ENCODE measurements at regions of chr3 and their contacts with region 1.

Region 1: DNA sequence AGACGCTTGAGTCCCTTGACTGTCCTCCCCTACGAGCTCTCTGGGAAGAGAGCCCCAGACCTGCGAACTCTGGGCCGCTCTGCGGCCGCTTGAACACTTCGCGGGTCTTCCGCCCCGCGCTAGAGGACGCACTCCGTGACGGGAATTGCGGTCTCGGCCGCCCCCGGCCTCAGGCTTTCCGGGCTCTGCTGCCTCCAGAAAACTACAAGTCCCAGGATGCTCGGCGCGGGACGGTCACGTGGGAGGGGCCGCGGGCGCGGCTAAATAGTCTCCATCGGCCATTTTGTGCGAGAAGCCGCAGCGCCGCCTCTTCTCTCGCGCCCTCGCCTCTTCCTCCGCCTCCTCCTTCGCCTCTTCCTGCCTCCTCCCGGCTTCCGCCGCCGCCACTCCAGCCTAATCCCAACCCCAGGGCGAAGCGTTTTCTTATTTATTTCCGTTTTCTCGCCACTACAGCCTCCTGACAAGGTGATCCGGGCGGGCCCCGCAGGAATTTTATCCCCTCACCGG is at the start of gene EIF1B:
- DNase-seq: peak; percentile 95 to 99 (median 98)
- ATAC-seq: peak; percentile 97
- H3K4me3 ChIP-seq: peak within 1 kb of the TSS; percentile 80
- H3K4me3 Mint-ChIP-seq: peak within 1 kb of the TSS; percentile 92 to 100 (median 99)
- H3K27ac ChIP-seq: peak within 1 kb of the TSS; percentile 99
- H3K27ac Mint-ChIP-seq: peak within 1 kb of the TSS; percentile 97 to 100 (median 99)
- H3K4me1 ChIP-seq: peaks cover 5 to 16% of the 10 kb centered on the region in 2 donors
- H3K4me1 Mint-ChIP-seq: peaks cover 5 to 44% (median 30%) of the 10 kb centered on the region in 7 donors
- H3K27me3 ChIP-seq: no peaks in the 10 kb centered on the region
- H3K27me3 Mint-ChIP-seq: no peaks in the 10 kb centered on the region
- total RNA-seq, gene EIF1B: 34.5 to 82.0 (median 53.3) TPM

Region 2: GRCh38 chr3:39383045-39383880 is 926.2 kb before region 1 on chr3 and contains the start of gene SLC25A38:
- CTCF ChIA-PET with region 1: no interaction called
- POLR2A ChIA-PET with region 1: interaction called, 3 read pairs
- intact Hi-C with region 1: loop called (anchors 1 to 5 kb)
- DNase-seq: peak; percentile 60 to 86 (median 84)
- ATAC-seq: peak; percentile 86
- H3K4me3 ChIP-seq: peak within 1 kb of the TSS; percentile 88
- H3K4me3 Mint-ChIP-seq: peak within 1 kb of the TSS; percentile 91 to 99 (median 97)
- H3K27ac ChIP-seq: peak within 1 kb of the TSS; percentile 96
- H3K27ac Mint-ChIP-seq: peak within 1 kb of the TSS; percentile 95 to 100 (median 99)
- H3K4me1 ChIP-seq: peaks cover 26 to 39% of the 10 kb centered on the region in 2 donors
- H3K4me1 Mint-ChIP-seq: peaks cover 36 to 59% (median 49%) of the 10 kb centered on the region in 7 donors
- H3K27me3 ChIP-seq: no peaks in the 10 kb centered on the region
- H3K27me3 Mint-ChIP-seq: no peaks in the 10 kb centered on the region
- total RNA-seq, gene SLC25A38: 30.3 to 50.2 (median 46.8) TPM

Region 3: DNA sequence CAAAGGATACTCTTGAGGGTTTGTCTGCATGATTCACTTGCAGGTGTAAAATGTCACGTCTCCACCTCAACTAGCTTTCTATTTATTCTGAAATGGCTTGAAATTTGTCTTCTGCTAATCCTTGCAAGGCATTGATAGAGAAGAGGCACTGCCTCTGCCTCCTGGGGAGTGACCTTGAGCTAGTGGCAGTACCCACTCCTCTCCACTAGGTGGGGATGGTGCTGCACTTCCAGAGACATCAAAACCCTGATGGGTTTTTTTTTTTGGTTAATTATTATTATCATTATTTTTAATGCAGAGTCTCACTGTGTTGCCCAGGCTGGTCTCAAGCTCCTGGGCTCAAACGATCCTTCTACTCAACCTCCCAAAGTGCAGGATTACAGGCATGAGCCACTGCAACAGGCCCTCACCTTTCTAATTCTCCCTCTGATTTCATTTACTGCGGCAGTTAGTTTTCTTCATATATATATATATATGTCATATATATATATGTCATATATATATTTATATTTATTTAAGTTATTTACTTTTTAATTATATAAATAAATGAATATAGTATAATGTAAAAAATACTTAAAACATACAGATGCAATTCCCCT is 117.5 kb before region 1 on chr3:
- CTCF ChIA-PET with region 1: interaction called, 90 read pairs
- POLR2A ChIA-PET with region 1: interaction called, 3 read pairs
- intact Hi-C with region 1: loop called in 1 of 2 experiments (anchors 2 kb)
- DNase-seq: peak; percentile 7 to 55 (median 38)
- ATAC-seq: peak; percentile 85
- H3K4me3 ChIP-seq: no peak overlapping the region
- H3K4me3 Mint-ChIP-seq: no peak overlapping the region
- H3K27ac ChIP-seq: no peak overlapping the region
- H3K27ac Mint-ChIP-seq: no peak overlapping the region
- H3K4me1 ChIP-seq: no peaks in the 10 kb centered on the region
- H3K4me1 Mint-ChIP-seq: no peaks in the 10 kb centered on the region
- H3K27me3 ChIP-seq: no peaks in the 10 kb centered on the region
- H3K27me3 Mint-ChIP-seq: no peaks in the 10 kb centered on the region

Region 4: GRCh38 chr3:40258555-40258954 is 50.9 kb before region 1 on chr3:
- CTCF ChIA-PET with region 1: no interaction called
- POLR2A ChIA-PET with region 1: no interaction called
- intact Hi-C with region 1: no loop called
- DNase-seq: no peak
- ATAC-seq: peak; percentile 29
- H3K4me3 ChIP-seq: no peak overlapping the region
- H3K4me3 Mint-ChIP-seq: no peak overlapping the region
- H3K27ac ChIP-seq: no peak overlapping the region
- H3K27ac Mint-ChIP-seq: no peak overlapping the region
- H3K4me1 ChIP-seq: no peaks in the 10 kb centered on the region
- H3K4me1 Mint-ChIP-seq: no peaks in the 10 kb centered on the region
- H3K27me3 ChIP-seq: no peaks in the 10 kb centered on the region
- H3K27me3 Mint-ChIP-seq: no peaks in the 10 kb centered on the region

Region 5: GRCh38 chr3:40476478-40477470 is 167.3 kb after region 1 on chr3 and contains the start of gene ZNF619:
- CTCF ChIA-PET with region 1: interaction called, 3 read pairs
- POLR2A ChIA-PET with region 1: interaction called, 4 read pairs
- intact Hi-C with region 1: loop called in 1 of 2 experiments (anchors 1 kb)
- DNase-seq: peak; percentile 11 to 60 (median 47)
- ATAC-seq: peak; percentile 93
- H3K4me3 ChIP-seq: peak within 1 kb of the TSS; percentile 82
- H3K4me3 Mint-ChIP-seq: peak within 1 kb of the TSS; percentile 84 to 97 (median 89)
- H3K27ac ChIP-seq: peak within 1 kb of the TSS; percentile 80
- H3K27ac Mint-ChIP-seq: peak within 1 kb of the TSS; percentile 61 to 97 (median 90)
- H3K4me1 ChIP-seq: peaks cover 7 to 8% of the 10 kb centered on the region in 2 donors
- H3K4me1 Mint-ChIP-seq: peaks cover 13 to 38% (median 31%) of the 10 kb centered on the region in 7 donors
- H3K27me3 ChIP-seq: no peaks in the 10 kb centered on the region
- H3K27me3 Mint-ChIP-seq: no peaks in the 10 kb centered on the region
- total RNA-seq, gene ZNF619: 5.0 to 13.9 (median 12.3) TPM

Region 6: GRCh38 chr3:40524568-40525285 is 215.3 kb after region 1 on chr3 and contains the start of gene ZNF621:
- CTCF ChIA-PET with region 1: no interaction called
- POLR2A ChIA-PET with region 1: interaction called, 3 read pairs
- intact Hi-C with region 1: loop called (anchors 1 kb)
- DNase-seq: peak; percentile 43 to 90 (median 73)
- ATAC-seq: peak; percentile 99
- H3K4me3 ChIP-seq: peak within 1 kb of the TSS; percentile 69
- H3K4me3 Mint-ChIP-seq: peak within 1 kb of the TSS; percentile 85 to 97 (median 96)
- H3K27ac ChIP-seq: peak within 1 kb of the TSS; percentile 81
- H3K27ac Mint-ChIP-seq: peak within 1 kb of the TSS; percentile 91 to 98 (median 97)
- H3K4me1 ChIP-seq: peaks cover 0 to 15% of the 10 kb centered on the region in 2 donors
- H3K4me1 Mint-ChIP-seq: peaks cover 17 to 39% (median 27%) of the 10 kb centered on the region in 7 donors
- H3K27me3 ChIP-seq: no peaks in the 10 kb centered on the region
- H3K27me3 Mint-ChIP-seq: no peaks in the 10 kb centered on the region
- total RNA-seq, gene ZNF621: 14.6 to 26.9 (median 21.9) TPM

Region 7: DNA sequence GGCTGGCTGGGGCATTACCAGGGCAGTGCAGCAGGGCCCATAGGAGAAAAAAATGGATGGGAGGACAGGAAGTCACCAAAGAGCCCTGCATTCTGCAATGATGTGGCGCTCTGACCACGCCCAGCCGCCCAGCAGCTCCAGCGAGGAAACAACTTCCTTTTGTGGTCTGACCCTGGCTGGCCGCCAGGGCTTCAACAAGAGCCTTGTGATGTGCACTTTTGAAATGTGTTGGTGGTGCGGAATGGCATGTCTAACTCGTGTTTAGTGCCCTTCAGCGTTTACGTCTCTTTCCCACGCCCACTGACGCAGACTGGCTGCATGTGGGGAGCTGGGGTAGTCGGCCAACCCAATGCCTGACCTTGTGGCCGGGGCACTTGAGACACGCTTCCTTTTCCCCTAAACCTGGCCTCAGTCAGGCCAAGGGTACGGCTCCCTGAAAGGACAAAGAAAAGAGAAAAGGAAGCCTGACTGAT is 808.0 kb after region 1 on chr3:
- CTCF ChIA-PET with region 1: no interaction called
- POLR2A ChIA-PET with region 1: no interaction called
- intact Hi-C with region 1: loop called in 1 of 2 experiments (anchors 1 kb)
- DNase-seq: peak; percentile 67 to 93 (median 90)
- ATAC-seq: peak; percentile 92
- H3K4me3 ChIP-seq: peak overlapping the region; percentile 25
- H3K4me3 Mint-ChIP-seq: peak overlapping the region; percentile 43 to 90 (median 78)
- H3K27ac ChIP-seq: peak overlapping the region; percentile 68
- H3K27ac Mint-ChIP-seq: peak overlapping the region; percentile 67 to 98 (median 93)
- H3K4me1 ChIP-seq: peaks cover 12 to 27% of the 10 kb centered on the region in 2 donors
- H3K4me1 Mint-ChIP-seq: peaks cover 18 to 67% (median 46%) of the 10 kb centered on the region in 7 donors
- H3K27me3 ChIP-seq: no peaks in the 10 kb centered on the region
- H3K27me3 Mint-ChIP-seq: no peaks in the 10 kb centered on the region

Region 8: DNA sequence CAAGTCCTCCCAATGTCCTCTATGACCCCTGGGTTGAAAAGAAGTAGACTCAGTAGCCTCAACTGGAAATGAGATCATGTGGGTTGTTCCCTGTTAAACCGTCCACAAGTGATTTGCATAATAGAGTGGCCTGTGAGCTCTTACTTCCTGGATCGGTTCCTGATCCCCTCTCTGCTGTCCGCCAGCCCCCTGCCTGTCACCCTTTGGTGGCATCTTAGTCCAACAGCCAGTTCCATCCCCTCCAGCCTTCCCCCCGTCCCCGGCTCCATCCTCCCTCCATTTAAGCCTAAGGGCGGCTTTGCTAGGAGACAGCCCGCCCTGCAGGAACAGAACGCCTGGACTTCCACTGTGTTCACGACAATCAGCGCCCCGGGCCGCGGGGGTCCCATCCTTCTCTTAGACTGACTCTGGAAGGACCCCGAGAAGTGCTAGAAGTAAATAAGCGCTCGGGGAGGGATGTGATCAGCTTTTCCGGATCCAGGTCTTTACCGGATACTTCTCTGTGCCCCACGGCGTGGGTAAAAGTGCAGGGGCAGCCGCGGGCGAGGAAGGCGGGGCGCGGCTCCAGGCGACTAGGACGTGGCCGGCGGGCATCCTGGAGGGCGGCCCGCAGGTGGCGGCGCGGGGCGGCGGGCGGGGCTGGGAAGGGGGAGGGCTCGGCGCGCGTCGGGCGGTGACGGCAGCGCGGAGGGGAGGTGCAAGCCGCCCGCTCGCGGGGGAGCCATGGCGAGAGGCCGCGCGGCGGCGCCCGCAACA is 1703.6 kb after region 1 on chr3:
- CTCF ChIA-PET with region 1: no interaction called
- POLR2A ChIA-PET with region 1: interaction called, 3 read pairs
- intact Hi-C with region 1: loop called in 1 of 2 experiments (anchors 1 kb)
- DNase-seq: peak; percentile 36 to 65 (median 58)
- ATAC-seq: peak; percentile 88
- H3K4me3 ChIP-seq: peak overlapping the region; percentile 78
- H3K4me3 Mint-ChIP-seq: peak overlapping the region; percentile 86 to 95 (median 90)
- H3K27ac ChIP-seq: peak overlapping the region; percentile 78
- H3K27ac Mint-ChIP-seq: peak overlapping the region; percentile 84 to 98 (median 93)
- H3K4me1 ChIP-seq: peaks cover 10 to 15% of the 10 kb centered on the region in 2 donors
- H3K4me1 Mint-ChIP-seq: peaks cover 19 to 39% (median 37%) of the 10 kb centered on the region in 7 donors
- H3K27me3 ChIP-seq: no peaks in the 10 kb centered on the region
- H3K27me3 Mint-ChIP-seq: no peaks in the 10 kb centered on the region

Measured in naive thymus-derived CD4-positive, alpha-beta T cell (primary cell).